Cardiac septum (tissue), 1 donor: ENCODE measurements at regions of chr12 and their contacts with region 1.

Region 1: DNA sequence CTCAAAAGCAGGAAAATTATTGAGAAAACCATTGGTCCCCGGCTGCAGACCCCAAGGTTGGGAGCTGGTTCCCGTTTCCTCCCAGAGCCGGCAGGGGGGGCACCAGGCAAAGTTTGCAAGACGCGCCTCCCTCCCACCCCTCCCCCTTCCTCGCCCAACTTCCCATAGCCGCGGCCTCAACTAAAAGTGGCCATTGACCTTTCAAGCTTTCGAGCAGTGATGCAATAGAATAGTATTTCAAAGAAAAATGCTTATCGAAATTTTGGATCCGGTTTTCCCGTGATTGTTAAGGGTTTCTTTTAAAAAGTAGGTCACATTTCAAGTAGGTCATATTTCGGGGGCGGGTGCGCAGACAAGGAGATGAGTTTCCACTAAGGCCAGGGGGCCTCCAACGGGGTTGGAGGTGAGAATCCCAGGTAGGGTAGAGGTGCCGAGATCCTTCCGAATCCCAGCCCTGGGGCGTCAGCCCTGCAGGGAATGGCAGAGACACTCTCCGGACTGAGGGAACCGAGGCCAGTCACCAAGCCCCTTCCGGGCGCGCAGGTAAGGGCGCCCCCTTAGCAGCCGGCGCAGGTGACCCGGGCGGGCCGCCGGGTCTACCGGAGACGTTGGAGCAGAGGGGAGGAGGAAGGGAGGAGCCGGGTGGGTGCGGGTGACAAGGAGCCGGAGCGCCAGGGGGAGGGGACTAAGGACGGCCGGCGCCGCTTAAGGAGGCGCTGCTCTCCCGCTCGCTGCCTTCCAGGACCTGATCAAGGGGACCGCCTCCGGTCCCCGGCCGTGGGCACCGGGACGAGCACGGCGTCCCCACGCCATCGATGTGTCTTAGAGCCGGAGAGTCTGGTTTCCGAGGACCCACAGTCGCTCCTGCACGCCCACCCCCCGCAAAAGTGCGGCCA is 2.6 kb upstream of the SOCS2 start:
- DNase-seq: peak; percentile 90

Region 2: GRCh38 chr12:93526786-93527428 is 43.0 kb before region 1 on chr12:
- intact Hi-C with region 1: loop called (anchors 5 kb)
- DNase-seq: no peak

Region 3: GRCh38 chr12:93616584-93617101 is 46.7 kb after region 1 on chr12:
- intact Hi-C with region 1: no loop called
- DNase-seq: no peak

Region 4: DNA sequence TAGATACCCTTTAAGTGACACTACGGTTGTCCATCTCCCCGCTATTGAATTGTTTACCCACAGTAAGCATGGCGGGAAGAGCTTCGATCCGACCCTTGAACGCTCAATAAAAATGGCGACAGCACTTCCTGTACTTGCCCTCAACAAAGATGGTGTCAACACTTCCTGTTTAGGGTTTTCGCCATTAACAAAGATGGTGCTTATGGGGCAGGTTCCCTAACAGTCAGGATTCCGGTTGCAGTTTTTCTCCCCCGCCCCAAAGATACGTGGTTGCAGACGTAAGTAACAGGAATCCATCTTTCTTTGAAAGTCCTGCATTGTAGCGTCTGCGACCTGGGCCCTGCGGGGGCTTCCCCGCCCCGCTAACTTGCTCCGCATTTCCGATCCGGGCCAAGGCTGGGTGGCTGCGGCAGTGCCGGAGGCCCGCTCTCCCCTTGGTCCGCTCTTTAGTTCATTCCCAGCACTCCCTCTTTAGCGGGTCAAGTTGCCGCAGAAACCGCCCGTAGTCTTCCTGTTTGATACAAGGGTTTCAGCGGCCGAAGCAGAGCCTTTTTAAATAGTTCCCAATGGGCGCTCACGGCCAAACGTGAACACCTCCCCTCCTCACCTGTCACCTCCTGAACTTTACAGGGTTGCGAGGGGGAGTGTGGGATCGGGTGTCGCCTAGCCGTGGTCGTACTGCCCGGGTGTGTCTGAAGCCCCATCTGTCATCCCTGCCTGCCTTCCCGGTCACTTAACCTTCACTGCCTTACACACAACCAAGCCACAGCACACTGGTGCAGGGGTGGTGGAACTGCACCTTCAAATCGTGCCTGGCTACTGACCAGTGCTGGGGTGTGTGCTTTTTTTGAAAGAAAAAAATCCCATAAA is 107.5 kb after region 1 on chr12 and contains the start of gene CRADD:
- intact Hi-C with region 1: loop called (anchors 1 kb)
- DNase-seq: peak; percentile 87
- total RNA-seq, gene CRADD: 50.8 TPM

Region 5: GRCh38 chr12:93766796-93767523 is 197.1 kb after region 1 on chr12:
- intact Hi-C with region 1: loop called (anchors 5 kb)
- DNase-seq: no peak

Region 6: GRCh38 chr12:93802698-93803423 is 233.0 kb after region 1 on chr12:
- intact Hi-C with region 1: loop called (anchors 5 kb)
- DNase-seq: no peak

Region 7: DNA sequence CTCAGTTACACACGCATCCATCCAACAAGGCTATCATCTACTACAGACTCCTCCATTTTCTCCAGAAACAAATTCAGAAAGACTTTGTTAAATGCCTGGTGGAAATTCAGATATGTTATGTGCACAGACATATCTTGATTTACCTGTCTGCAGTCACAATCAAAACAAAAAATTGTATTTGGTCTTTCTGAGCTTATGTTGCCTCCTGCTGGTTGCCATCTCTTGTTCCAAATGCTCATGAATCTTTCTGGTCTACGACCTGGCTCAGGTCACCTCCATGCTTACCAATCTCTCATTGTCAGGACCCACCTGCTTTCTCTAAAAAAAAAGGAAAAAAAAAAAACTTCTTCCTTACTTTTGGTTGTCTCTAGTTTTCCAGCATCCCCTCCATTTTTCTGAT is 409.3 kb after region 1 on chr12:
- intact Hi-C with region 1: loop called (anchors 2 kb)
- DNase-seq: no peak

Region 8: DNA sequence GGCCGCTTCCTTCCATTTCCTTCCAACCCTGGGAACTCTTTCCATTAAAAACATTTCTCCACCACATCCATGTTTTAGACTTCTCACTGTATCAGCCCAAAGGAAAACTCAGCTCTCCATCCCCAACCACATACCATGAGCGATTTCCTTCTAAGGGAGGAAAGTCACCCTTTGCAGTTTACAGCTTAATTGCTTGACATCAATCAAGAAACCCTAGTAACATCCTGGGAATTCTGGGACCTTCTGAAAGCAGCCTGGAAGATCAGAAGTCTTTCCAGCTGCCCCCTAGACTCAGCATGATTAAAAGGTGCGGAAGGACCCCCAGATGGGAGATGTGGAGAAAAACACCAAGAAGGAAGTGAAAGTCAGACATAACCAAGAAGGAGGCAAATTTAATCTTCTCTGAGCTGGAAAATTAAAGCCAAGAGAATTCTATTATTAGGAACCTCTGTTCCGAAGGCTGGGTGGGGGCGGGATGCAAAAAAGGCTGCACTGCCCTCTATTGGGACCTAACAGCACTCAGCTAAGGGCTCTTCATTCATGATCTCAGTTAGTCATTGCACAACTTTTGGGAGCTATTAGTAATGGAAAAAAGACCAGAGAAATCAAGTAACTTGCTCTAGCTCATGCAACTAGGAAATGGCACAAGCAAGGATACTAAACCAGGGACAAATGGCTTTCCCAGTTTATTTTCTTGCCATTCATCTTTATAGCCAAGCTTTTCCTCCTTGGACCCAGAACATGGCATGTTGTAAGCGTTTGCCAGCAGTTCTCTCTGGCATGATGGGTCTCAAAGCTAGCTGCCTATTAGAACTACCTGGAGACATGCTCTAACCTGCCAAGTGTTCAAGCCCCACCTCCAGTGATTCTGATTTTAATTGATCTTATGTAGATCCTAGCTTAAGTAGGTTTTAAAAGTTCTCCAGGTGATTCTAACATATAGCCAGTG is 505.4 kb after region 1 on chr12:
- intact Hi-C with region 1: loop called (anchors 2 kb)
- DNase-seq: no peak